Lower lobe of right lung (tissue), 2 donors: ENCODE measurements at regions of chr22 and their contacts with region 1.

Region 1: GRCh38 chr22:46122511-46122971 is 27.8 kb upstream of the PPARA start:
- DNase-seq: peak; percentile 84
- ATAC-seq: peak; percentile 65 to 68
- H3K4me3 ChIP-seq: no peak overlapping the region
- H3K27ac ChIP-seq: no peak overlapping the region
- H3K4me1 ChIP-seq: peaks cover 4% of the 10 kb centered on the region
- H3K27me3 ChIP-seq: no peaks in the 10 kb centered on the region
- CTCF ChIP-seq: peak; percentile 97

Region 2: DNA sequence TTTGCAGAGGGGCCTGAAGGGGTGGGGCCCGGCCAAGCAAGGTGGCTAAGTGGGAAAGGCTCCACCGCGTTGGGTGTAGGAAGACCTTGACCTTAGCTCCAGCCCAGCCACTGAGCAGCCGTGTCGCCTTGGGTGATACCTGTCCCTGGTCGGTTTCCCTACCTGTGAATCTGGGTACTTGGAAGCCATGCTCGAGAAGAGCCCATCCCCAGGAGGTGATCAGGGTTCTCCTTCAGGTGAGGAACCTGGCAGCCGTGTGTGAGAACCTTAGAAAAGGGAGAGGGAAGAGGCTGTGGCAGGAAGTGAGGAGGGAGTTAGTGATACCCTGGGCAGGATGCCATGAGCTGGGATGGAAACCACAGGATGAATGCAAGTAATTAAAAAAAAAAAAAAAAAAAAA is 49.4 kb after region 1 on chr22:
- intact Hi-C with region 1: no loop called
- DNase-seq: no peak
- ATAC-seq: no peak
- H3K4me3 ChIP-seq: no peak overlapping the region
- H3K27ac ChIP-seq: no peak overlapping the region
- H3K4me1 ChIP-seq: peaks cover 16% of the 10 kb centered on the region
- H3K27me3 ChIP-seq: no peaks in the 10 kb centered on the region
- CTCF ChIP-seq: no peak

Region 3: GRCh38 chr22:46309526-46310085 is 187.1 kb after region 1 on chr22:
- intact Hi-C with region 1: loop called (anchors 5 kb)
- DNase-seq: peak; percentile 24
- ATAC-seq: no peak
- H3K4me3 ChIP-seq: no peak overlapping the region
- H3K27ac ChIP-seq: no peak overlapping the region
- H3K4me1 ChIP-seq: no peaks in the 10 kb centered on the region
- H3K27me3 ChIP-seq: no peaks in the 10 kb centered on the region
- CTCF ChIP-seq: no peak